ENCODE measurements at regions of chr1 and their contacts with region 1.

Region 1: GRCh38 chr1:182595641-182596240 is 6.7 kb upstream of the RNASEL start:
- DNase-seq: peak; percentile 70
- CTCF ChIP-seq: peak; percentile 95

Region 2: DNA sequence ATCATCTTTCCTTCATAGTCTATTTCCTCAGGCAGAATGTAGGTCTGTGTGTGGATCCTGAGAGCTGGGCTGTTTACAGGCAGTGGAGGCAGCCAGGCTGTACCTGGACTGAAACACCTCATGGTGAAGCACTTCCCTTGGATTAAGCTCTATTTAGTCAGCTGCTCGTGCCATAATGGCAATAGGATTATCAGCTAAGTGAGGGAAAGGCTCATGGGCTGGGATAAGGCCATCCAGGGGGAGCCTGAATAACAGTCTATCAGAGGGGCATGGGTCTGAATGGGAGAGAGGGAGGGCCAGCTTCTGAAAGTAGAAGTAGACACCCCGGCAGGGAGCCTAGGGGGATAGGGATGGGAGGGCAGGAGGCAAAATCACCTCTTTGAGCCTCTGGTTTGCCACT is 15.0 kb before region 1 on chr1:
- CTCF ChIA-PET with region 1: interaction called, 25 read pairs
- POLR2A ChIA-PET with region 1: no interaction called
- DNase-seq: no peak
- CTCF ChIP-seq: no peak

Region 3: GRCh38 chr1:182629499-182630096 is 33.9 kb after region 1 on chr1:
- CTCF ChIA-PET with region 1: interaction called, 27 read pairs
- POLR2A ChIA-PET with region 1: no interaction called
- DNase-seq: no peak
- CTCF ChIP-seq: no peak

Region 4: GRCh38 chr1:182649041-182649440 is 53.3 kb after region 1 on chr1:
- CTCF ChIA-PET with region 1: interaction called, 12 read pairs
- POLR2A ChIA-PET with region 1: no interaction called
- DNase-seq: peak; percentile 37
- CTCF ChIP-seq: no peak

Region 5: DNA sequence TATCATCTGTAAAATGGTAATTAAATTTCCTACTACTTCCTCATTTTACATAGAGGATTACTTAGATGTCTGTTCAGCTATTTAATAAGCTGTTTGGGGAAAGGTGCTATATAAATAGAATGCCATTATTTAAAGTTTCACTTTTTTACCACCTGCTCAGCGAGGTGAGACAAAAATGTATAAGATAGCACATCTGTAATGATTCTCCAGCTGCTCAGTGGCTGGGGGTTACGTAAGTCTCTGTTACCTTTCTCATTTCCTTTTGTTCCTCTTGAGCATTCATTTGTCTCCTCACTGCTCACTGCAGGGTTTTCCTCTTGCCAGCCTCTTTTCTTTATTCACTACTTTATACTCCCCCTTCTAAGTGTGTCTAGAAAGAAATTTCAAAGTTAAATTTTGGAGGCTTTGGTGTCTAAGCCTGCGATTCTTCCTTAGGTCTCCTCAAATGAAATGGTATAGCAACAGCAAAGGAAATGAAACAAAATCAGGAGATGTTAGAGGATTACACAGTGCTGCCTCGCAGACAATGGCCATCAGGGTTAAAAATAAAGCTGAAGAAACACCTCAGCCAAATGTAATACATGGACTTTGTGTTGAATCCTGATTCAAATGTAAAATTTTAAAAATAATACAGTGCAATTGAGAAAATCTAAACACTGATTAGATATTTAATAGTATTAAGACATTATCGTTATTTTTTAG is 81.8 kb after region 1 on chr1:
- CTCF ChIA-PET with region 1: interaction called, 15 read pairs
- POLR2A ChIA-PET with region 1: no interaction called
- DNase-seq: peak; percentile 68
- CTCF ChIP-seq: no peak

Region 6: GRCh38 chr1:182768963-182769362 is 173.2 kb after region 1 on chr1:
- CTCF ChIA-PET with region 1: interaction called, 10 read pairs
- POLR2A ChIA-PET with region 1: no interaction called
- DNase-seq: no peak
- CTCF ChIP-seq: no peak

Region 7: DNA sequence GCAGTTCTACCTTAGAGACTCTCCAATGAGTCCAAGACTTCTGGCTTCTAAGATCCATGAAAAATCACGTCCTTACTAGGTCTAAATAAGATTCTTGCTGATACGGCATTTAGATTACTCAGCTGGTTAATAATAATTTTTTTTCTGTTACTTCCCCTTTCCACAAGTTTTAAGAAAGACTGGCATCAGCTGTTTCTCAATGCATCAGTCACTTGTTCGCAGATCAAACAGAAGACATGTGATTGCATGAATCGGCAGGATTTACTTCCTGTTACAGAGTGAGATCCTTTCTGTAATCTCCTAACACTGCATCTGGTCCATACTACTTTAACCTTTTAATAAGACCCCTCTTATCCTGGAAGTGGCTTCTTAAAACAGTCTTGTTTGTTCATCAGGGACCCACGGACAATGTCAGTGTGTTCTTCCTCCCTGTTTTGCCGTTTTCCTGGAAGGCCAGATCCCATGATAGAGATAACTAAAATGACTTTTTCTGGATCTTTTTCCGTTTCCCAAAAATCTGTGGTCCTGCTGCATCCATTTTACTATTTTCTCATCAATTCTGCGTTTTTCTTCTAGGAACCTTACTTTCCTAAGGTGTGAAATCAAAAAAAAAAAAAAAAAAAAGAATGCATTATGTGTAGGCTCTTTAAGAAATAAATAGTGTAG is 200.0 kb after region 1 on chr1:
- CTCF ChIA-PET with region 1: interaction called, 1,252 read pairs
- POLR2A ChIA-PET with region 1: no interaction called
- DNase-seq: no peak
- CTCF ChIP-seq: no peak